Mammary epithelial cell (primary cell): ENCODE measurements at regions of chr14 and their contacts with region 1.

Region 1: DNA sequence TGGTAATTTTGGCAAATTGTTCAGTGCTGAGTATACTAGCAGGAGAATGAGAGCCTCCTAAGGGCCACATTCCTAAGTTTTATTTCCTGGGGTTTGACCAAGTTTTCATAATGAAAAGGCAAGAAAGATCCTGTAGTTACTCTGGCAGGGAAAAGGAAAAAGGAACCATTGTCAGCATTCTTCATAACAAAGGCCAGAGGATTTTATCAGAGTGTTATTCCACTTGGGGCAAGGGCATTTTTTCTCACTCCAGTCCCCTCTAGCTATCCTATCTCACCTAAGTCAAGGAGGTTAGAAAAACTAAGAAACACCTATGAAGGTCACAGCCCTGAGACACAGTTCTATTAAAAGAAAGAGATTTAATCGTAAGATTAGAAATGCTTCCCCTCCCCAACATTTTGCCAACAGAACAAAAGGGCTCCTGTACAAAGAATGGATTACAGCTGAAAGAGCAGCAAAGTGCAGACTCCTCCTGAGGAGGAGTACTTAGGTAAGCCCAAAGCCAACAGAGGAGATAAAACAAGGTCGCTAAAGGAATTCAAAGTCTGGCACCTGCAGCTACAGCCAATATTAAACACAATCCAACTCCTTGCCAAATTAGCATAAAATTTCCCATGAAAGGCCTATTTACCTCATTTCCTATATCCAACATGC is 162.4 kb downstream of the GALC start:
- DNase-seq: no peak
- H3K4me3 ChIP-seq: no peak overlapping the region
- H3K27ac ChIP-seq: no peak overlapping the region
- H3K4me1 ChIP-seq: no peaks in the 10 kb centered on the region
- H3K27me3 ChIP-seq: no peaks in the 10 kb centered on the region
- CTCF ChIP-seq: no peak

Region 2: DNA sequence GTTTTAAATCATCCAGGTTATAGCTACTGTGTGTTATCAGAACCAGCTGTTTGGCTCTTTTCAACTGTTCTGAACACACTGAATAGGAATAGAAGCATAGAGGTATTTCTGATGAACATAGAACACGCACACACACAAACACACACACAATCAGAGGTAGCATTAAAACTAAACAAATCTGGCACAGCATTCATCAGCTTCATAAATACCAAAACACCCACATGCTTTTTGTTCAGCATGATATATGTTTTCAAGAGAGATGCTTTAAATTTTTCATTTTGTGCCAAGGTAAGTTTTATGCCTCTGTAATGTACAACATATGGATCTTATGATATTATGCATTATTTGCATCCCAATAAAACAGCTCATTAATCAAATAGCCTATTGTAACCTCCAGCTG is 46.2 kb before region 1 on chr14:
- CTCF ChIA-PET with region 1: no interaction called
- dilution Hi-C with region 1: loop called (anchors 5 kb)
- in situ Hi-C with region 1: no loop called
- intact Hi-C with region 1: no loop called
- DNase-seq: no peak
- H3K4me3 ChIP-seq: no peak overlapping the region
- H3K27ac ChIP-seq: no peak overlapping the region
- H3K4me1 ChIP-seq: no peaks in the 10 kb centered on the region
- H3K27me3 ChIP-seq: no peaks in the 10 kb centered on the region
- CTCF ChIP-seq: no peak